Transverse colon (tissue), 4 donors: ENCODE measurements at regions of chr19 and their contacts with region 1.

Region 1: GRCh38 chr19:49173198-49173597 is 15.6 kb downstream of the TRPM4 start:
- DNase-seq: no peak
- H3K4me3 ChIP-seq: no peak overlapping the region
- H3K27ac ChIP-seq: no peak overlapping the region
- H3K4me1 ChIP-seq: peaks cover 0 to 26% (median 11%) of the 10 kb centered on the region in 4 donors
- H3K27me3 ChIP-seq: no peaks in the 10 kb centered on the region
- CTCF ChIP-seq: no peak
- EP300 ChIP-seq: no peak
- POLR2A ChIP-seq: no peak

Region 2: DNA sequence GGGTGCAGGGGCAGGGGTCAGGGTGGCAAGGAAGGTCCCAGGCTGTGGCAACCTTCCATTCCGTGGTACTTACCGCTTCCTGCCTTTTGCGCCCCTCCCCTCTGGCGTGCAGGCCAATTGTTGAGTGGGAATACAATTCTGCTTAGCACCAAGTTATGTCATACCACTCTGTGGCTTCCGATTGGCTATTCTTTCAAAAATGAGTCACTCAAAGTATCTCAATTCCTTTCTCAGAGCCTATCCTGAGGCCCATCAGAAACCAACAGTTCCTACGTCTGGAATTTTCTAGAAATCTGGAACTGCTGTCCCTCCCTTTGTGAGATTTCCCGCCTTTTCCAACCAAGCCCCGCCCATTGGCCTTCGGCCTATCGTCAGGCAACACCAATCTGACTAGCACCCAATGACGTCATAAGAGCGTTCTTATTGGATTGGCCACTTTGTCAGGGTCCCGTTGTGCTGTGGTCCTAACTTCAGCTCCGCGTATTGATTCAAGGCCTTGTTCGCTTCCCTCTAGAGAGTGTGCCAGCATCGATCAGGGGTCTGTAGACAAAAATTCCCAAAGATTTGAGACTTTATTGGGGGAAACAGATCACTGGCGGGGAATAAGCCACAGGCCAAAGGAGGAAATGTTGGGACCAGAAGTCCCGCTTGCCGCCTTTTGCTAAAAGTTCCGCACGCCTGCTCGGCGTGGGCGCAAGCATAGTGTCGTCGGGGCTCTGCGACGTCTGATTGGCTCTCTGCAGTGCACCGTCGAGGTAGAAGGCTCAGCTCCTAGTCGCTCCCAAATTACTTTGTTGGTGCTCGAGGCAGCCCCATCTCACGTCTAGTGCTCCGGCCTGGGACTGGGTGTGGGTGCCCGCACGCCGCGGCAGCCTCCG is 512.1 kb before region 1 on chr19:
- in situ Hi-C with region 1: no loop called
- intact Hi-C with region 1: loop called (anchors 5 kb)
- DNase-seq: peak; percentile 87
- H3K4me3 ChIP-seq: peak overlapping the region in 1 of 4 donors; percentile 9
- H3K27ac ChIP-seq: peak overlapping the region; percentile 3 to 43 (median 24)
- H3K4me1 ChIP-seq: peaks cover 0 to 10% (median 4%) of the 10 kb centered on the region in 4 donors
- H3K27me3 ChIP-seq: no peaks in the 10 kb centered on the region
- CTCF ChIP-seq: no peak
- EP300 ChIP-seq: no peak
- POLR2A ChIP-seq: no peak

Region 3: GRCh38 chr19:48926909-48927308 is 246.3 kb before region 1 on chr19:
- in situ Hi-C with region 1: no loop called
- intact Hi-C with region 1: no loop called
- DNase-seq: peak; percentile 23
- H3K4me3 ChIP-seq: no peak overlapping the region
- H3K27ac ChIP-seq: peak overlapping the region in 1 of 4 donors; percentile 21
- H3K4me1 ChIP-seq: peaks cover 0 to 6% (median 3%) of the 10 kb centered on the region in 4 donors
- H3K27me3 ChIP-seq: peaks cover 3% of the 10 kb centered on the region
- CTCF ChIP-seq: no peak
- EP300 ChIP-seq: no peak
- POLR2A ChIP-seq: no peak